Left colon (tissue), 2 donors: ENCODE measurements at regions of chr19 and their contacts with region 1.

Region 1: DNA sequence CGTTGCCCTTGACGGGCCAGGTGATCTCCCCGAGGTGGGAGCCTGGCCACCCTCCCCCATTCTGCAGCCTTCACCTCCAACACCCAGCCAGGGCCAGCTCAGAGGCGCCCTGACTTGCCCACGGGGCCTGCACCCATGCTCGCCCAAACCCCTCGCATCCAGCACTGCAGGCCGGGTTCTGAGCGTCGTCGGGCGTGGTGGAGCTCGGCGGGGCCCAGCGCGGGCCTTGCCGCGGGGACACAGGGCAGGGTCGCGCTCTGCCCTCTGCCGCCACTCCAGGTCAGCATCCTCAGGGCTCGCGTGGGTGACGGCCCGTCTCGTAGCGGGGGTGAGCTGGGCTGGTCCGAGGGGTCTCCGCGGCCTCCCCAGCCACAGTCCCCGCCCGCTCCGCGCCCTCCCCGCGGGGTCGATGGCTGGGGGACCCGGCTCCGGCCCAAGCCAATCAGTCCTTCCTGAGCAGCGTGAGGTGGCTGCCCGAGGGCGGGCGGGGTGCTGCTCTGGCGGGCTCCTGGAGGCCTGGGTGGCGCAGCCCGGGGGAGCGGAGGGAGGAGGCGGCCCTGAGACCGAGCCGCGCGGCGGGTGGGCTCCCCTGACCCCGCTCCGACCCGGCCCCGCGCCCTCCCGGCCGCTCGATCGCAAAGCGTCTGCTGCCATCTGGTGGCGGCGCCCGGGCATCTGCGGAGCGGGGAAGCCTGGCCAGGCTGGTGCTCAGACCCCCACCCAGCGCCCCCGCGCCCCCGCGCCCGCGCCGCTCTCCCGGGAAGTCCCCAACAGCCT is 61.4 kb downstream of the CCNE1 start:
- DNase-seq: peak in 1 of 2 donors; percentile 66
- ATAC-seq: peak; percentile 80

Region 2: DNA sequence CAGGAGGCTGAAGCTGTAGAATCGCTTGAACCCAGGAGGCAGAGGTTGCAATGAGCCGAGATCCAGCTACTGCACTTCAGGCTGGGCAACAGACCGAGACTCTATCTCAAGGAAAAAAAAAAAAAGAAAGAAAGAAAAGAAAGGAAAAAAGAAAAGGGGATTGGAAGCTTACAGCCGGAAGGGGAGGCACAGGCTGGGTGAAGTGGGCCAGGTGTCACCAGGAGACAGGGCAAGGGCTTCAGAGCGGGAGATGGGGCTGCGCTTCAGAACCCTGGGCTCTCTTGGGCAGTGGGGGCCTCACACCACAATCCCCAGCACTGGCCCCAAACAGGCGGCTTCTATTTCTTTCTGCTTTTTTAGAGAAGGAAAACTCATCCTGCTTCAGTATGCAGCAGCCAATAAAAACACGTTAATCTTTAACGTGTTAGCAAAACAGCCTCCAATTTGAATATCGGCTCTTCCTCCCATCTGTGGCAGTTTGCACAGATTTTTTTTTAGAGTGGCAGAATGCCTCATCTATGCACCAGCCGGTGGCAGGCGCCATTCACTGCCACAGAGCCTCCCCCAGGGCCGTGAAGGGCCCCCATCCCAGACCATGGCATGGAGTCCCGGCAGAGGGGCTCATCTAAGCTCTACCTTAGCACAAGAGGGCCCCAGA is 111.5 kb before region 1 on chr19:
- intact Hi-C with region 1: loop called (anchors 10 kb)
- DNase-seq: peak in 1 of 2 donors; percentile 15
- ATAC-seq: peak; percentile 64